Activated CD4-positive, alpha-beta memory T cell treated with anti-CD3 and anti-CD28 coated beads, Interleukin-2, amount 10 ng/mL, durations not matched to agents 7 days and 5 days (primary cell): ENCODE measurements at regions of chr7 and their contacts with region 1.

Region 1: DNA sequence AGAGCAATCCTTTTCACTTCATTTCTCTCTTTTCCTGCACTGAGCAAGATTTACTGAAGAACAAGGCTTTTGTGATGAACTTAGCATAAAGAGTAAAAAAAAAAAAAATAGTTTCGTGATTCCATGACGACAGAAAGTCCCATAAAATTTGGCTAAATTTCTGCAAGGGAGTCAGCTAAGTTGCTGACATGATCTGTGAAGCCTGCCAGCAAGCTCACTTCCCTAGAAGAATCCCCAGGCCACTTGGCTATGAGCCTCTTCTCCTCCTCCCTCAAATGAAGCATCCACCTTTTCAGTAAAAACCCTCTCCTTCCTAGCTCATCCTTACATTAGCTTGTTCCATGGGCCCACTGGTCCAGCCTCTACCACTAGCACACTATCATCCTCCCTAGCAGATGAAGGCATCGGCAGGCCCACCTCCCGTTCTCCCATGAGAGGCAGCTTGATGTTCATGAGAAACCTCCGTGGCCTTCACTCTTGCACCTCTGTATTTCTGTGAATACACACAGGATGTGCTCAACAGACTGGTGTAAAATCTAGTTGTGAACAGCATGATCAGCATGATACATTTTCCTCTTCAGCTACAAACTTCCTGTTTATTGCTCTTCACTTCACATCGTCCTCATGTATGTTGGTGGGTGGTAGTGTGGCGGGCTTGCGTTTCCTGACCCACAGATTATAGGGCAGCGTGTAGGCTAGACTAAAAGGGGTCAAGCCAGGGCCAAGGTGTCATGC is 30.9 kb downstream of the GIMAP8 start:
- DNase-seq: peak; percentile 70
- H3K4me3 Mint-ChIP-seq: peak overlapping the region; percentile 81
- H3K27ac Mint-ChIP-seq: peak overlapping the region; percentile 99
- H3K4me1 Mint-ChIP-seq: peaks cover 95% of the 10 kb centered on the region
- H3K27me3 Mint-ChIP-seq: no peaks in the 10 kb centered on the region

Region 2: DNA sequence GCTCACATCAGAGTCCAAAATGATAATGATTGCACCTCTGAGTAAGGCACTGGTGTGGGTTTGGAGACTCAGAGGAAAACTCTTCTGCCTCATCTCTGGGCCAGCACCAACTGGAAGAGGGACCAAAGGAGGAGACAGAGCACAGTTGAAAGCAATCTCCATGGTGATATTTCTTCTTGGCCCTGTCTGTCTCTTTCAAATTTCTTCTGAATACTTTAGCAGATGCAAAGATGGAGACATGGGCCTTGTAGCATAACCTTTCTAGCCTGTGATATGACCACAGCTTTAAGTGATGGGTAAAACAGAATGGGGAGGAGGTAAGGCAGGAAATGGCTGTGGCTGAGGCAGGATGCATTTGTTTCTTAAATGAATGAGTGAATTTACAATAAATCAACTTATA is 21.2 kb after region 1 on chr7:
- CTCF ChIA-PET with region 1: interaction called, 7 read pairs
- POLR2A ChIA-PET with region 1: interaction called, 45 read pairs
- DNase-seq: peak; percentile 68
- H3K4me3 Mint-ChIP-seq: peak overlapping the region; percentile 29
- H3K27ac Mint-ChIP-seq: peak overlapping the region; percentile 90
- H3K4me1 Mint-ChIP-seq: peaks cover 75% of the 10 kb centered on the region
- H3K27me3 Mint-ChIP-seq: no peaks in the 10 kb centered on the region

Region 3: GRCh38 chr7:150507947-150508602 is 26.7 kb after region 1 on chr7:
- CTCF ChIA-PET with region 1: interaction called, 7 read pairs
- POLR2A ChIA-PET with region 1: interaction called, 45 read pairs
- DNase-seq: no peak
- H3K4me3 Mint-ChIP-seq: peak overlapping the region; percentile 60
- H3K27ac Mint-ChIP-seq: peak overlapping the region; percentile 85
- H3K4me1 Mint-ChIP-seq: peaks cover 90% of the 10 kb centered on the region
- H3K27me3 Mint-ChIP-seq: no peaks in the 10 kb centered on the region

Region 4: GRCh38 chr7:150668472-150668911 is 187.1 kb after region 1 on chr7:
- CTCF ChIA-PET with region 1: no interaction called
- POLR2A ChIA-PET with region 1: interaction called, 10 read pairs
- DNase-seq: peak; percentile 75
- H3K4me3 Mint-ChIP-seq: peak overlapping the region; percentile 41
- H3K27ac Mint-ChIP-seq: peak overlapping the region; percentile 95
- H3K4me1 Mint-ChIP-seq: peaks cover 84% of the 10 kb centered on the region
- H3K27me3 Mint-ChIP-seq: no peaks in the 10 kb centered on the region